ENCODE measurements at regions of chr1 and their contacts with region 1.

Region 1: GRCh38 chr1:66360285-66360724 is 173.6 kb upstream of the SGIP1 start:
- DNase-seq: no peak
- H3K4me3 Mint-ChIP-seq: no peak overlapping the region
- H3K27ac Mint-ChIP-seq: no peak overlapping the region
- H3K4me1 Mint-ChIP-seq: peaks cover 79% of the 10 kb centered on the region
- H3K27me3 Mint-ChIP-seq: no peaks in the 10 kb centered on the region

Region 2: GRCh38 chr1:66294692-66295384 is 65.5 kb before region 1 on chr1:
- CTCF ChIA-PET with region 1: no interaction called
- POLR2A ChIA-PET with region 1: no interaction called
- DNase-seq: no peak
- H3K4me3 Mint-ChIP-seq: no peak overlapping the region
- H3K27ac Mint-ChIP-seq: no peak overlapping the region
- H3K4me1 Mint-ChIP-seq: peaks cover 31% of the 10 kb centered on the region
- H3K27me3 Mint-ChIP-seq: no peaks in the 10 kb centered on the region

Region 3: GRCh38 chr1:66371233-66372005 is 11.1 kb after region 1 on chr1:
- CTCF ChIA-PET with region 1: interaction called, 14 read pairs
- POLR2A ChIA-PET with region 1: no interaction called
- DNase-seq: peak; percentile 19
- H3K4me3 Mint-ChIP-seq: no peak overlapping the region
- H3K27ac Mint-ChIP-seq: peak overlapping the region; percentile 88
- H3K4me1 Mint-ChIP-seq: peaks cover 78% of the 10 kb centered on the region
- H3K27me3 Mint-ChIP-seq: no peaks in the 10 kb centered on the region

Region 4: GRCh38 chr1:66552829-66553228 is 192.5 kb after region 1 on chr1:
- CTCF ChIA-PET with region 1: no interaction called
- POLR2A ChIA-PET with region 1: no interaction called
- DNase-seq: no peak
- H3K4me3 Mint-ChIP-seq: no peak overlapping the region
- H3K27ac Mint-ChIP-seq: no peak overlapping the region
- H3K4me1 Mint-ChIP-seq: no peaks in the 10 kb centered on the region
- H3K27me3 Mint-ChIP-seq: peaks cover 10% of the 10 kb centered on the region

Region 5: DNA sequence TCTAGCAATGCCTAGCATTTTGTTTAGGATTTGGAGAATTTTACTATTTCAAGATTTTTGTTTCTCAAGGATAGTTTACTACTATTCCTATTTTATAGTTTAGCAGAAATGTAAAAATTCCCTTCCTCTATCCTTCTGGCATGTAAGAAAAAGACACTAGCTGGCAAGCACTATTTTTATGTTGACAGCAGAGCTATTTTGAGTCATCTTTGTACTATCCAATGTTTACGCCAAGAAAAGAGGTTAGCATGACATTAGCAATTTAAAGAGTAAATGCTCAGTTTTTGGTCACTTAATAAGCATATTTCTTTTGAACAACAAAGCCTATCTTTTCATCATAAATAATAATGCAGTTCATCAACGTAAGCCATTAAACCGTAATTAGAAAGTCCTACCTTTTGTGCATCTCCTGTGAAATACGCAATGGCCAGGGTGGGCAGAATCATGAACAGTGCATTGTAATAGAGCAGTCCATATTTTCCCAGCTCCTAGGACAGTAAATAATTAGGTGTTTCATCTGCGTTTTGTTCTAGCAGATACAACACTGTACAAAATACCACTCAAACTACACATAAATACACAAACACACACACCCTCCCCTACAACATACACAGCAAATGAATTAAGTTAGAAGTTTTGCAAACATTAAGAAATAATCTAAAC is 681.7 kb after region 1 on chr1:
- CTCF ChIA-PET with region 1: no interaction called
- POLR2A ChIA-PET with region 1: no interaction called
- DNase-seq: no peak
- H3K4me3 Mint-ChIP-seq: no peak overlapping the region
- H3K27ac Mint-ChIP-seq: no peak overlapping the region
- H3K4me1 Mint-ChIP-seq: peaks cover 1% of the 10 kb centered on the region
- H3K27me3 Mint-ChIP-seq: no peaks in the 10 kb centered on the region